Psoas muscle (tissue), 8 donors: ENCODE measurements at regions of chr5 and their contacts with region 1.

Region 1: GRCh38 chr5:89133975-89134374 is 251.0 kb upstream of the MEF2C start:
- DNase-seq: no peak
- ATAC-seq: no peak
- H3K4me3 ChIP-seq: no peak overlapping the region
- H3K27ac ChIP-seq: no peak overlapping the region
- H3K4me1 ChIP-seq: no peaks in the 10 kb centered on the region
- H3K27me3 ChIP-seq: no peaks in the 10 kb centered on the region
- CTCF ChIP-seq: no peak

Region 2: DNA sequence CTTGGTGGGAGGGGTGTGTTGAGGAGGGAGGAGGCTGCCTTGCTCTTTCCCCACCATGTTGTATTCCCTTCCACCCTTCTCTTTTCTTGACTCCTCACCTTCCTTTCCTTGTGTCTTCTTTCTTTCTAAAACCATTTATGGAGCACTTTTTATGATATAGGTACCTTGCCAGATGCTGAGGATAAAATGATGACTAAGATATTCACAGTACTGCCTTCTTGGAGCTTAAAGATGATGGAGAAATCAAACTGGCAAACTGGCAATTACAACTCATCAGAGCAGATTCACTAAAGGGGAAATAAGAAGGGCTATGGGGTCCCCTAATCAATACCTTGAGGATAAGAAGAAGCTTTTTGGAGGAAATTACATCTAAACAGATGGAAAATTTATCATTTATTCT is 22.3 kb after region 1 on chr5:
- intact Hi-C with region 1: loop called in 1 of 2 experiments (anchors 2 kb)
- DNase-seq: no peak
- ATAC-seq: no peak
- H3K4me3 ChIP-seq: no peak overlapping the region
- H3K27ac ChIP-seq: no peak overlapping the region
- H3K4me1 ChIP-seq: no peaks in the 10 kb centered on the region
- H3K27me3 ChIP-seq: no peaks in the 10 kb centered on the region
- CTCF ChIP-seq: no peak